Gastrocnemius medialis (tissue), 4 donors: ENCODE measurements at regions of chr16 and their contacts with region 1.

Region 1: DNA sequence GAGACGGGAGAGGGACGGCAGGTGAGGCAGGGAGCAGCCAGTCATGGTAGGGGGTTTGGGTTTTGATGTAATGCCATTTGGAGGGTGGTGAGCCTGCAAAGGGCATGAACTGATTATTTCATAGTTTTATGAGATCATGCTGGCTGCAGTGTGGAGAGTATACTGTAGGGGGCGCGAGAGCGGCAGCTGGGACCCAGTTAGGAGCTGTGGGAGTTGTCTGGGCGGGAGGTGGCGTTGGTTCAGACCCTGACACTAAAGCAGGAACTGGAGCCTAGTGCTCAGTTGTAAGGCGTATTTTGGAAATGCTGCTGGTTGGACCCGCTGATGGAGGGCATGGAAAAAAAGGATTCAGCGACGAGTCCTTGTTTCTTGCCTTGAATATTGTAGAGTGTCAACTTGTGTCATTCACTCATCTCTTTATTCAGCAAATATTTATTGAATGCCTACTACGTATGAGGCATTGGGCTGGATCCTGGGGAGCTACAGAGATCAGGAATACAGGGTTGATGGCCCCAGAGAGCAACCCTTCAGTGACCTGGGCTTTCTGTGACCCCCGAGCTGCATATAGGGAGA is 23.7 kb upstream of the KDM8 start:
- DNase-seq: peak; percentile 60 to 72
- ATAC-seq: peak; percentile 58 to 92
- H3K4me3 ChIP-seq: no peak overlapping the region
- H3K27ac ChIP-seq: no peak overlapping the region
- H3K4me1 ChIP-seq: no peaks in the 10 kb centered on the region
- H3K27me3 ChIP-seq: peaks cover 0 to 3% (median 3%) of the 10 kb centered on the region in 3 donors
- CTCF ChIP-seq: peak; percentile 83 to 94 (median 90)
- POLR2A ChIP-seq: no peak

Region 2: GRCh38 chr16:27080870-27081269 is 98.7 kb before region 1 on chr16:
- in situ Hi-C with region 1: loop called in 1 of 4 experiments (anchors 25 kb)
- intact Hi-C with region 1: no loop called
- DNase-seq: no peak
- ATAC-seq: no peak
- H3K4me3 ChIP-seq: no peak overlapping the region
- H3K27ac ChIP-seq: no peak overlapping the region
- H3K4me1 ChIP-seq: no peaks in the 10 kb centered on the region
- H3K27me3 ChIP-seq: no peaks in the 10 kb centered on the region
- CTCF ChIP-seq: peak in 1 of 5 experiments; percentile 16
- POLR2A ChIP-seq: no peak

Region 3: DNA sequence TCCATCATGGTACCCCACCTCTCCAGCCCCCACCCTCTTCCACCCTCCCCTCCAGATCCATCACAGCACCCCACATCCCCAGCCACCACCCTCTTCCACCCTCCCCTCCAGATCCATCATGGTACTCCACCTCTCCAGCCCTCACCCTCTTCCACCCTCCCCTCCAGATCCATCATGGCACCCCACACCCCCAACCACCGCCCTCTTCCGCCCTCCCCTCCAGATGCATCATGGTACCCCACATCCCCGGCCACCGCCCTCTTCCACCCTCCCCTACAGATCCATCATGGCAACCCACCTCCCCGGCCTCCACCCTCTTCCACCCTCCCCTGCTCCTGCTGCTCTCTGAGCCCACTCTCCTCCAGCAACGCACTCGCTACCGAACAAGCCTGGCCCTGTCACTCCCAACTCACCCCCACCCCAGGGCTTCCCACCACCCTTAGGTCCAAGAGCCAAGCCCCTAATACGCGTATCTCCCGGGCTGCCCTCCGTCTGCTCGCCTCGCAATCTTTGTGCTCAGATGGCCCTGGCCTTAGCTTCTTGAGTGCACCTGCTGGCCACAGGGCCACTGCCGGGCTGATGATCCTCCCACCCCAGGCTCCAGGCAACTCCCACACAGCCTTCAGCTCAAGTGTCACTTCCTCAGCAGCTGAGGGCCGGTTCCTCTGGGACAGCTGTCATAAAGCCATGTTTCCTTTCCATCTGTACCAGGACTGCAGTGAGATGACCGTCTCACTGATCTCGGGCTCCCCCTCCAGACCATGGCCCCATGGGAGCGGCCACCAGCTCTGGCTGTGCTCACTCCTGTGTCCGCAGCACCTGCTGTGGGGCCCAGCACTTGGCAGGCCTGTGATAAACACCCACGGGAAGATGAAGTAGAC is 49.3 kb after region 1 on chr16:
- in situ Hi-C with region 1: no loop called
- intact Hi-C with region 1: loop called (anchors 1 kb)
- DNase-seq: peak; percentile 67 to 88
- ATAC-seq: peak; percentile 96 to 98
- H3K4me3 ChIP-seq: no peak overlapping the region
- H3K27ac ChIP-seq: peak overlapping the region; percentile 48 to 72 (median 62)
- H3K4me1 ChIP-seq: peaks cover 15% of the 10 kb centered on the region in 2 donors
- H3K27me3 ChIP-seq: no peaks in the 10 kb centered on the region
- CTCF ChIP-seq: peak in 2 of 5 experiments; percentile 30 to 44
- POLR2A ChIP-seq: no peak

Region 4: GRCh38 chr16:27367461-27368357 is 188.1 kb after region 1 on chr16:
- in situ Hi-C with region 1: loop called in 3 of 4 experiments (anchors 5 to 10 kb)
- intact Hi-C with region 1: loop called (anchors 1 kb)
- DNase-seq: peak; percentile 32 to 56
- ATAC-seq: peak; percentile 44 to 60
- H3K4me3 ChIP-seq: peak overlapping the region; percentile 14 to 52 (median 28)
- H3K27ac ChIP-seq: peak overlapping the region in 2 of 4 donors; percentile 24 to 56
- H3K4me1 ChIP-seq: peaks cover 0 to 7% of the 10 kb centered on the region in 2 donors
- H3K27me3 ChIP-seq: no peaks in the 10 kb centered on the region
- CTCF ChIP-seq: peak; percentile 24 to 77 (median 62)
- POLR2A ChIP-seq: no peak

Region 5: GRCh38 chr16:27374804-27375425 is 195.3 kb after region 1 on chr16:
- in situ Hi-C with region 1: loop called in 2 of 4 experiments (anchors 5 to 10 kb)
- intact Hi-C with region 1: no loop called
- DNase-seq: peak in 1 of 2 donors; percentile 35
- ATAC-seq: peak; percentile 26 to 55
- H3K4me3 ChIP-seq: no peak overlapping the region
- H3K27ac ChIP-seq: no peak overlapping the region
- H3K4me1 ChIP-seq: no peaks in the 10 kb centered on the region
- H3K27me3 ChIP-seq: no peaks in the 10 kb centered on the region
- CTCF ChIP-seq: peak in 2 of 5 experiments; percentile 17 to 28
- POLR2A ChIP-seq: peak; percentile 7 to 8

Region 6: GRCh38 chr16:27449434-27450195 is 270.0 kb after region 1 on chr16:
- in situ Hi-C with region 1: loop called (anchors 10 kb)
- intact Hi-C with region 1: no loop called
- DNase-seq: no peak
- ATAC-seq: no peak
- H3K4me3 ChIP-seq: no peak overlapping the region
- H3K27ac ChIP-seq: no peak overlapping the region
- H3K4me1 ChIP-seq: no peaks in the 10 kb centered on the region
- H3K27me3 ChIP-seq: peaks cover 22% of the 10 kb centered on the region in 3 donors
- CTCF ChIP-seq: no peak
- POLR2A ChIP-seq: no peak

Region 7: DNA sequence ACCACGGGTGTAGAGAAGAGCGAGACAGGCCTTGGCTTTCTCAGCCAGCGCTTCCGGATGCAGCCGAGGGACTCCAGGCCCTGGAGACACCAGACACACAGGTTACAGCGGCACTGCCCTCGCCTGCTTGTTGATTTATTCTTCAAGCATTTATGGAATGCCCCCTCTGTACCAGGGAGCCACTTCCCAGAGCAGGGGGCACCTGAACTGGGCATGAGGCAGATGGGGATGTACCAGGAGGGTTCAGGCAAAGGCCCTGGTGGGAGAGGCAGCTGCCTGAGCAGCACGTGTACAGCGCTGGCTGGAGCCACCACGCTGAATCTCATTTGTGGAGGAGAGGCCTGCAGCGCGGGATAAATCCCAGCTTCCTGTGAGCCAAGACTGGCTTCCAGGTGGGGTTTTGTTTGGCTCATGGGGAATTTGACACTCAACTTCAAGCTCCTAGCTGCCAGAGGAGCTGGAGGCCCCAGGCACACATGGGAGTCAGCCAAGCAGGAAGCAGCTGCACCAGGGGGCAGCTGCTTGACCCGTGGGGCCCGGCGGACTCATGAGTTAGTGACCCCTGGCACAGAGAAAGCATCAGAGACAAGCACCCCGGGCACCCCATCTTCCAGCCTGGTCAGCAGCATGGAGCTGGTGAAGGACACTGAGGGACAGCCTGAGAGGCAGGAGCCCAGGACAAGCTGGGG is 282.0 kb after region 1 on chr16:
- in situ Hi-C with region 1: loop called (anchors 10 kb)
- intact Hi-C with region 1: loop called (anchors 1 kb)
- DNase-seq: peak in 1 of 2 donors; percentile 74
- ATAC-seq: peak; percentile 12 to 59
- H3K4me3 ChIP-seq: no peak overlapping the region
- H3K27ac ChIP-seq: peak overlapping the region; percentile 59 to 82 (median 74)
- H3K4me1 ChIP-seq: peaks cover 28 to 34% of the 10 kb centered on the region in 2 donors
- H3K27me3 ChIP-seq: no peaks in the 10 kb centered on the region
- CTCF ChIP-seq: no peak
- POLR2A ChIP-seq: no peak